ENCODE measurements at regions of chr6 and their contacts with region 1.

Region 1: GRCh38 chr6:34414999-34415858 is 10.6 kb downstream of the RPS10 start:
- DNase-seq: peak; percentile 99
- ATAC-seq: peak; percentile 87
- H3K4me3 ChIP-seq: peak overlapping the region in 2 of 3 experiments; percentile 12 to 42; a peak in 3 of 6 replicates
- H3K27ac ChIP-seq: peak overlapping the region; percentile 82
- H3K4me1 ChIP-seq: peaks cover 49% of the 10 kb centered on the region
- H3K27me3 ChIP-seq: no peaks in the 10 kb centered on the region
- CTCF ChIP-seq: peak; percentile 89
- EP300 ChIP-seq: peak in 1 of 2 experiments; percentile 46; a peak in 2 of 4 replicates
- POLR2A ChIP-seq: peak in 1 of 2 experiments; percentile 35; a peak in 1 of 4 replicates
- RAD21 ChIP-seq: peak; percentile 92

Region 2: DNA sequence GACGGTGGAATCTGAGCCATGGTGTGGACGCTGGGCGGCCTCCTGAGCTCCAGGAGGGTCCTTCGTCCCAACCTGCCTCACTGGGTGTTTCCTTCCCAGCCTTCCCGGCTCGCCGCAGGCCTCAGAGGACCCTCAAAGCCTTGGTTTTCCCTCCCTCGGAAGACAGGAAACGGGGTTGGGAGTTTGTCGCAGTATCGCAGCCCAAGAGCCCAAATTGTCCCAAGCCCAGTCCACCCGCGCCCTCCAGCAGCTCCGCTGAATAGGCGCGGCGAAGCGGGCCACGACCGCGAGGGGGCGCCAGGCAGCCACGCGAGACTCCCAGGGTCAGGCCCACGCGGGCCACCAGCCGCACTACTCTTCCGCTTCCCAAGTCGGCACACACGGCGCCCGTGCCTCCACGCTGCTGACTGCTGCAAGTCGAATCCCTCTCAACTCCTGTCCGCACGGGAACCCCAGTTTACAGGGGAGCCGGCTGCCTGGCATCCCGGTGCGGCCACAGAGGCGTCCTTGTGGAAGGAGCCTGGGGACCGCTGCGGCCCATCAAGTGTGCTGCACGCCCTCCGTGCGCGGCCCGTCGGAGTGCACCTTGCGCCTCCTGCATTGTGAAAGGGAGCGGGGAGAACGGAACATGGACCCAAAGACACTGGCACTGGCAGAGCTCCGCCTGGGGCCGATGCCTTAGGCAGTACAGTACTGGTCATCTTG is 219.0 kb before region 1 on chr6:
- CTCF ChIA-PET with region 1: interaction called, 7 read pairs
- POLR2A ChIA-PET with region 1: interaction called, 26 read pairs
- in situ Hi-C with region 1: no loop called
- intact Hi-C with region 1: no loop called
- DNase-seq: no peak
- ATAC-seq: peak; percentile 90
- H3K4me3 ChIP-seq: peak overlapping the region; percentile 55 to 74 (median 59)
- H3K27ac ChIP-seq: no peak overlapping the region
- H3K4me1 ChIP-seq: peaks cover 13% of the 10 kb centered on the region; the same call in 1 of the 2 replicates
- H3K27me3 ChIP-seq: peaks cover 8 to 26% of the 10 kb centered on the region in 2 experiments; a peak in 4 of 5 replicates
- CTCF ChIP-seq: peak; percentile 100
- EP300 ChIP-seq: no peak
- POLR2A ChIP-seq: no peak
- RAD21 ChIP-seq: peak; percentile 93

Region 3: DNA sequence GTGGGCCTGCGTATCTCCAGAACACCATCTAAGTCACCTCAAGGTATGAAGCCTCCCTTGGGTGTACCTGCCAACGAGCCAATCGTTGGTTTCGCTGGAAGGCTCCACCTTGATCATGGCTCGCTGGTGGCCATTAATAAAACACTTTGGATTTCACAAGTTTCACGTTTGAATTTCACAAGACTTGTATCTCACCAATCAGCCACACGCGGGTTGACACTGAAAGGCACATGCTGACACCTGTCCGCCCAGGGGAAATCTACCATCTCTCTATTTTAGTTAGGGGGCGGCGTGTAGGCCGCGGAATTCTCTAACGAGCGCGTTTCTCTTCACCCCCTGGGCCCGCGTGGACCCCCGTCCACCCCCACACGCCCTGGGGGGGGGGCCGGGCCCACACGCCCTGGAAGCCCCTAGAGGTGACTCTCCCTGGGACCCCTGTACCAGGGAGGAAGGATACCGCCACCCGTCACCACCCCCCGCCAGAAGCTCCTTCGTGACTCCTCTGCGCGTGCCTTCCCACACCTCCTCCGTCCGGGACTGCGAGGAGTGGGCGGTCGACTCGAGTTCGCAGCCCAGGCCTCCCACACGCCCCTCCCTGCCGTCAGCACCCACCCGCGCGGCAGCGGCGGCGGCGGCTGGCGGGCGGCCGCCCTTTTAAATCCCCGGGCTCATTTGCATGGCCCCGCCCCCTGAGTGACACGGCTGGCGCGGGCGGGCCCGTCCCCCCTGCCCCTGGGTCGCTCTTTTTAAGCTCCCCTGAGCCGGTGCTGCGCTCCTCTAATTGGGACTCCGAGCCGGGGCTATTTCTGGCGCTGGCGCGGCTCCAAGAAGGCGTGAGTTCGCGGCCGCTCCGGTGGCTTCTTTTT is 178.9 kb before region 1 on chr6 and contains the start of gene HMGA1:
- CTCF ChIA-PET with region 1: no interaction called
- POLR2A ChIA-PET with region 1: interaction called, 14 read pairs
- in situ Hi-C with region 1: no loop called
- intact Hi-C with region 1: no loop called
- DNase-seq: peak; percentile 81
- ATAC-seq: peak; percentile 72
- H3K4me3 ChIP-seq: peak within 1 kb of the TSS; percentile 79 to 91 (median 86)
- H3K27ac ChIP-seq: peak within 1 kb of the TSS; percentile 68
- H3K4me1 ChIP-seq: peaks cover 31% of the 10 kb centered on the region
- H3K27me3 ChIP-seq: peaks cover 0 to 2% of the 10 kb centered on the region in 2 experiments; a peak in 2 of 5 replicates
- CTCF ChIP-seq: no peak
- EP300 ChIP-seq: no peak
- POLR2A ChIP-seq: peak; percentile 86 to 87
- RAD21 ChIP-seq: no peak
- total RNA-seq, gene HMGA1: 145 and 150 TPM in 2 replicates

Region 4: GRCh38 chr6:34392497-34393190 is 22.6 kb before region 1 on chr6 and contains the start of gene NUDT3:
- CTCF ChIA-PET with region 1: no interaction called
- POLR2A ChIA-PET with region 1: interaction called, 22 read pairs
- in situ Hi-C with region 1: no loop called
- intact Hi-C with region 1: no loop called
- DNase-seq: peak; percentile 92
- ATAC-seq: peak; percentile 86
- H3K4me3 ChIP-seq: peak within 1 kb of the TSS; percentile 81 to 88 (median 86)
- H3K27ac ChIP-seq: peak within 1 kb of the TSS; percentile 93
- H3K4me1 ChIP-seq: peaks cover 35% of the 10 kb centered on the region
- H3K27me3 ChIP-seq: no peaks in the 10 kb centered on the region; a peak in 1 of 5 replicates
- CTCF ChIP-seq: peak; percentile 97
- EP300 ChIP-seq: no peak
- POLR2A ChIP-seq: peak; percentile 30 to 63; a peak in 3 of 4 replicates
- RAD21 ChIP-seq: peak; percentile 91
- total RNA-seq, gene NUDT3: 20.2 and 30.1 TPM in 2 replicates

Region 5: DNA sequence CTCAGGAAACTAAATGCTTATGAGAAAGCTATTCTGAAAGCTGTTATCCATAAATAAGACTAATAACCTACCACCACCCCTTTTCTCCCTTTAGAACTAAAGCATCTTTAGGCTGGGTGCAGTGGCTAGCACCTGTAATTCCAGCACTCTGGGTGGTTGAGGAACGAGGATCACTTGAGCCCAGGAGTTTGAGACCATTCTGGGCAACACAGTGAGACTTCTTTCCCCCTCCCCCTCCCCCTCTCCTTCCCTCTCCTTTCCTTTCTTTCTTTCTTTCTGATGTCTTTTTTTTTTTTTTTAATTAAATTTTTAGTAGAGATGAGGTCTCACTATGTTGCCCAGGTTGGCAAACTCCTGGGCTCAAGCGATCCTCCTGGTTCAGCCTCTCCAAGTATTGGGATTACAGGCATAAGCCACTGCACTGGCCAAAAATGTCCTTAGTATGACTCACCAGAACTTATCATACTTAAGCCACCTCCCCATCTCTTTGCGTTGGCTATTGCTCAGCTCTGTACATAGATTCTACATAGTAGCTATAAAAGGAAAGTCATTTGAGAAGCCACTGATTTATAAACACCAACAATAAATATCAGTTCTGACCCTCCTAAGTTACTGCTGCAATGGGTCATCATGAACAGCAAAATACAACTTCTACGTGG is 195.7 kb after region 1 on chr6:
- CTCF ChIA-PET with region 1: no interaction called
- POLR2A ChIA-PET with region 1: interaction called, 8 read pairs
- in situ Hi-C with region 1: no loop called
- intact Hi-C with region 1: loop called (anchors 1 kb)
- DNase-seq: peak; percentile 31
- ATAC-seq: no peak
- H3K4me3 ChIP-seq: no peak overlapping the region
- H3K27ac ChIP-seq: peak overlapping the region; percentile 37
- H3K4me1 ChIP-seq: peaks cover 13% of the 10 kb centered on the region
- H3K27me3 ChIP-seq: no peaks in the 10 kb centered on the region
- CTCF ChIP-seq: no peak
- EP300 ChIP-seq: no peak
- POLR2A ChIP-seq: no peak
- RAD21 ChIP-seq: no peak